Transverse colon (tissue), 4 donors: ENCODE measurements at regions of chr6 and their contacts with region 1.

Region 1: DNA sequence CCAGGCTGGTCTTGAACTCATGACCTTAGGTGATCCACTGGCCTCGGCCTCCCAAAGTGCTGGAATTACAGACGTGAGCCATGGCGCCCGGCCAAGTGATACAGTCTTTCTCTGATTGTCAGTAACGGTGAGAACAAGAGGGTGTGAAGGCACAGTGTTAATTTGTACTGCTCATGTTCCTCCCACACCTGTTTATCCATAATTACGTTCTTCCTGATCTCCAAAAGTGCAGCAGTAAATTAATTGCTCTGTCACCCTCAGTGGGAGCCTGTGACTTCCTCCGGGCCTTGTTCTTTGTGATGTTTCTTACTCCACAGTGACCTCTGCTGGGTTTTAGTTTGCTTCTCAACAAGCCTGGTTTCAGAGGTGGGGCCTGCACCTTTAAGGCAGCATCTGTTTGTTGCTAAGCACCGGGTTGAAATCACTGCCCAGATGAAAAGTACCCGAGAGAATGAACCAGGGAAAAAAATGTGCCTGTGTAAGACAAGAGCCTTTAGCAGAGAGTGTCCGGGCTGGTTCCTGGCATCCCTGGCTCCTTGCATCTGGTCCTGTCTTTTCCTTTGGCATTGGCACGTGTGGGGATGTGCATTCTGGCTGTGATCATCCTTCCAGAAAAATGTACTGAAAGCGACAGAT is 89.1 kb upstream of the CLDN20 start:
- DNase-seq: peak; percentile 46
- H3K4me3 ChIP-seq: no peak overlapping the region
- H3K27ac ChIP-seq: no peak overlapping the region
- H3K4me1 ChIP-seq: peaks cover 8 to 23% (median 12%) of the 10 kb centered on the region in 4 donors
- H3K27me3 ChIP-seq: no peaks in the 10 kb centered on the region
- CTCF ChIP-seq: peak; percentile 51 to 65 (median 52)
- EP300 ChIP-seq: no peak
- POLR2A ChIP-seq: no peak

Region 2: GRCh38 chr6:154675602-154676088 is 499.0 kb before region 1 on chr6:
- in situ Hi-C with region 1: loop called (anchors 25 kb)
- intact Hi-C with region 1: no loop called
- DNase-seq: peak; percentile 91
- H3K4me3 ChIP-seq: no peak overlapping the region
- H3K27ac ChIP-seq: no peak overlapping the region
- H3K4me1 ChIP-seq: no peaks in the 10 kb centered on the region
- H3K27me3 ChIP-seq: no peaks in the 10 kb centered on the region
- CTCF ChIP-seq: peak; percentile 97 to 99 (median 98)
- EP300 ChIP-seq: no peak
- POLR2A ChIP-seq: no peak

Region 3: GRCh38 chr6:154868143-154868594 is 306.5 kb before region 1 on chr6:
- in situ Hi-C with region 1: loop called in 1 of 4 experiments (anchors 10 kb)
- intact Hi-C with region 1: loop called (anchors 5 kb)
- DNase-seq: no peak
- H3K4me3 ChIP-seq: no peak overlapping the region
- H3K27ac ChIP-seq: no peak overlapping the region
- H3K4me1 ChIP-seq: peaks cover 0 to 16% (median 4%) of the 10 kb centered on the region in 4 donors
- H3K27me3 ChIP-seq: no peaks in the 10 kb centered on the region
- CTCF ChIP-seq: peak; percentile 49 to 69 (median 61)
- EP300 ChIP-seq: no peak
- POLR2A ChIP-seq: no peak

Region 4: GRCh38 chr6:154928325-154928922 is 246.3 kb before region 1 on chr6:
- in situ Hi-C with region 1: loop called (anchors 5 to 10 kb)
- intact Hi-C with region 1: loop called (anchors 5 kb)
- DNase-seq: peak; percentile 58
- H3K4me3 ChIP-seq: no peak overlapping the region
- H3K27ac ChIP-seq: no peak overlapping the region
- H3K4me1 ChIP-seq: peaks cover 0 to 11% (median 0%) of the 10 kb centered on the region in 4 donors
- H3K27me3 ChIP-seq: no peaks in the 10 kb centered on the region
- CTCF ChIP-seq: peak; percentile 68 to 76 (median 73)
- EP300 ChIP-seq: no peak
- POLR2A ChIP-seq: no peak

Region 5: GRCh38 chr6:155248008-155249001 is 73.6 kb after region 1 on chr6:
- in situ Hi-C with region 1: loop called in 3 of 4 experiments (anchors 5 to 10 kb)
- intact Hi-C with region 1: loop called (anchors 5 kb)
- DNase-seq: peak; percentile 42
- H3K4me3 ChIP-seq: no peak overlapping the region
- H3K27ac ChIP-seq: peak overlapping the region in 3 of 4 donors; percentile 3 to 69 (median 20)
- H3K4me1 ChIP-seq: no peaks in the 10 kb centered on the region
- H3K27me3 ChIP-seq: no peaks in the 10 kb centered on the region
- CTCF ChIP-seq: peak; percentile 55 to 63 (median 59)
- EP300 ChIP-seq: no peak
- POLR2A ChIP-seq: no peak

Region 6: DNA sequence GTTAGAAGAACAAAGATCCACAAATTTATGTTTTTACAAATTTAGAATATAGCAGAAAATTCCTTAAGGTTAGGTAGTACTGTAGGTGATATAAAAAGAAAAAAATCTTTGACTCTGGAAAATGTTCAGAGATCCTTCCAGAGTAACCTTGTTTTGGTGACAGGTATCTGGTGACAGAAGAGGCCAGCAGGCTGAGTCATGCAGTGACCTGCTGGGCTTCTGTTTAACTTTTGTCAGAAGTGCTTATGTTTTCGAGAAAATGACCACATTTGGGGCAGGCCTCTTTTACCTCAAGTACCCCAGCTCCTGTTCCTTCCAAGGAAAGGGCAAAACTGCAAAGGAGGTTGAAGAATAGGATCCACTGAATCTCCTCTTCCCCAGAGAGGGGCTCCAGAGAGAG is 78.6 kb after region 1 on chr6:
- in situ Hi-C with region 1: loop called in 3 of 4 experiments (anchors 5 to 10 kb)
- intact Hi-C with region 1: loop called (anchors 5 kb)
- DNase-seq: no peak
- H3K4me3 ChIP-seq: no peak overlapping the region
- H3K27ac ChIP-seq: no peak overlapping the region
- H3K4me1 ChIP-seq: no peaks in the 10 kb centered on the region
- H3K27me3 ChIP-seq: no peaks in the 10 kb centered on the region
- CTCF ChIP-seq: no peak
- EP300 ChIP-seq: no peak
- POLR2A ChIP-seq: no peak

Region 7: DNA sequence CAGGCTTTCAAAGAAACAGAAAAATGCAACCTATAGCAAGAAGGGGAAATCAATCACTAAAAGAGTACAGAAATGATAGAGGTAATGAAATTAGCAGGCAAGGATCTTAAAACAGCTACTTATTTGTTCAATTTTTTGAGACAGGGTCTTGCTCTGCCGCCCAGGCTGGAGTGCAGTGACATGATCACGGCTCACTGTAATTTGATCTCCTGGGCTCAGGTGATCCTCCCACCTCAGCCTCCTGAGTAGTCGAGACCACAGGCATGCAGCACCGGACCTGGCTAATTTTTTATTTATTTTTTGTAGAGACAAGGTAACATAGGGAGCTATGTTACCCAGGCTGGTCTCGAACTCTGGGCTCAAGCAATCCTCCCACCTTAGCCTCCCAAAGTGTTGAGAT is 118.0 kb after region 1 on chr6:
- in situ Hi-C with region 1: no loop called
- intact Hi-C with region 1: no loop called
- DNase-seq: no peak
- H3K4me3 ChIP-seq: no peak overlapping the region
- H3K27ac ChIP-seq: no peak overlapping the region
- H3K4me1 ChIP-seq: no peaks in the 10 kb centered on the region
- H3K27me3 ChIP-seq: no peaks in the 10 kb centered on the region
- CTCF ChIP-seq: no peak
- EP300 ChIP-seq: no peak
- POLR2A ChIP-seq: no peak